Pancreas (tissue), 10 donors: ENCODE measurements at regions of chr12 and their contacts with region 1.

Region 1: GRCh38 chr12:12985817-12986408 is 14.2 kb downstream of the HEBP1 start:
- DNase-seq: no peak
- ATAC-seq: peak in 3 of 4 donors; percentile 59 to 80 (median 71)
- H3K4me3 ChIP-seq: no peak overlapping the region
- H3K27ac ChIP-seq: no peak overlapping the region
- H3K4me1 ChIP-seq: peaks cover 0 to under 1% (median 0%) of the 10 kb centered on the region in 3 donors
- H3K27me3 ChIP-seq: no peaks in the 10 kb centered on the region
- CTCF ChIP-seq: peak in 1 of 4 donors; percentile 25

Region 2: GRCh38 chr12:12645485-12645884 is 340.4 kb before region 1 on chr12:
- intact Hi-C with region 1: no loop called
- DNase-seq: no peak
- ATAC-seq: peak in 2 of 4 donors; percentile 68
- H3K4me3 ChIP-seq: no peak overlapping the region
- H3K27ac ChIP-seq: no peak overlapping the region
- H3K4me1 ChIP-seq: no peaks in the 10 kb centered on the region
- H3K27me3 ChIP-seq: no peaks in the 10 kb centered on the region
- CTCF ChIP-seq: peak in 2 of 4 donors; percentile 24 to 29

Region 3: DNA sequence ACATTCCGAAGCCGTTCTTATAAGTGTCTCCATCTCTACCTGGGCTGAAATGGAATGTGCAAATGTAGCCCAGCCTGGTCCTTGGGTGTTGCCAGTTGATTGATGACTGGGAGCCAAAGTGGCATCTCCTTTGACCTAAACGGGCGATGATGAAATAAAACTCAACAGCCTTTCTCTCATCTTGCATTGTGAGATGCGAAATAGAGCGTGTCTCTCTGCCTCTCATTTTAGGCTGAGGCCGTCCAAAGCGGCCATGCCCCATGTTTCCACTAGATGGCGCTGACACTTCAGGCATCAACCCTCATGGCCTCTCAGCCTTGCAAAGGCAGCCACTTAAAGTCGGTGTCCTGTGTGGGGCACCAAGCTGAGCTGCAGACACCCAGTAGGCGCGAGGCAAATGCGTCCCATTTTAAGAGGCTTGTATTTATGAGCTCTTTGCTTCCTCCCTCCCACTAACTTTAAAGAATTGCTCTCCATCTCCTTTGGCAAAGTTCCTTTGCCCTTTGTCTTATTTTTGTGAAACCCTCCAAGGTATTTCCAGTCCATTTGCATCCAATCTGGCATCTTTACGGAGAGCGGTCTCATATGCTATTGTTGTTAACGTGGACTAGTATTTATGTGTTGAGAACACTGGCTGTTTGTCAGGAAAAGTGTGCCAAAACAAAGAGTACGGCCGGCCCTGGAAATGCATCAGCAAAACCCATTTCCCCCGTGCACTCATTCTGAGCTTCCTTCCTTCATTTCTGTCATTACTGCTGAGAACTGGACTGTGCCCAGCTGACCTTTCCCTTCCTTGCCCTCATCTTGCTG is 69.6 kb before region 1 on chr12:
- intact Hi-C with region 1: loop called in 1 of 3 experiments (anchors 5 kb)
- DNase-seq: peak; percentile 56 to 93 (median 84)
- ATAC-seq: peak; percentile 93 to 100 (median 98)
- H3K4me3 ChIP-seq: no peak overlapping the region
- H3K27ac ChIP-seq: no peak overlapping the region
- H3K4me1 ChIP-seq: no peaks in the 10 kb centered on the region
- H3K27me3 ChIP-seq: no peaks in the 10 kb centered on the region
- CTCF ChIP-seq: peak; percentile 93 to 97 (median 96)

Region 4: DNA sequence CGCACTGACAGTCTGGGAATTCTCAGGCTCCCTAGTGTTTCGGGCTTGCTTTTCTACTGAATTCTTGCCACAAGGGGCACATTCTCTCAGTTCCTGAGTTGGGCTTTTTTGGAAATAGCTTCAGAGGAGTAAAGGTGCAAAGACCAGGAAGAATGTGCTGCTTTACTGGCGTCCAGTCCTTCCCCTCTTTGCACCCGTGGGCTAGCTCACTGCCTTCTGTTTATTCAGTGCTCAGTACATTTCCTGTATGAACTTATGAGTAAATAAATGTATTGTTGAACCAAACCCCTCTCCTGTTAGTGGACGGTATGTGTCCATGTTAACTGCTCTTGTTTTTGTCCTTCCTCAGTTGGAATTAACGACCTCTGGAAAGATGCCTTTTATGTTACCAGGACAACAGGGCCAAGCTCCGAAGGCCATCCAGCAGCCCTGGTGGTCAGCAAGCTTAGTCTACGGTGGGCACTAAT is 93.6 kb after region 1 on chr12:
- intact Hi-C with region 1: no loop called
- DNase-seq: no peak
- ATAC-seq: no peak
- H3K4me3 ChIP-seq: no peak overlapping the region
- H3K27ac ChIP-seq: no peak overlapping the region
- H3K4me1 ChIP-seq: no peaks in the 10 kb centered on the region
- H3K27me3 ChIP-seq: no peaks in the 10 kb centered on the region
- CTCF ChIP-seq: no peak